Activated B cell treated with CpG ODN at 0.5 μM for 24 hours (primary cell): ENCODE measurements at regions of chr6 and their contacts with region 1.

Region 1: DNA sequence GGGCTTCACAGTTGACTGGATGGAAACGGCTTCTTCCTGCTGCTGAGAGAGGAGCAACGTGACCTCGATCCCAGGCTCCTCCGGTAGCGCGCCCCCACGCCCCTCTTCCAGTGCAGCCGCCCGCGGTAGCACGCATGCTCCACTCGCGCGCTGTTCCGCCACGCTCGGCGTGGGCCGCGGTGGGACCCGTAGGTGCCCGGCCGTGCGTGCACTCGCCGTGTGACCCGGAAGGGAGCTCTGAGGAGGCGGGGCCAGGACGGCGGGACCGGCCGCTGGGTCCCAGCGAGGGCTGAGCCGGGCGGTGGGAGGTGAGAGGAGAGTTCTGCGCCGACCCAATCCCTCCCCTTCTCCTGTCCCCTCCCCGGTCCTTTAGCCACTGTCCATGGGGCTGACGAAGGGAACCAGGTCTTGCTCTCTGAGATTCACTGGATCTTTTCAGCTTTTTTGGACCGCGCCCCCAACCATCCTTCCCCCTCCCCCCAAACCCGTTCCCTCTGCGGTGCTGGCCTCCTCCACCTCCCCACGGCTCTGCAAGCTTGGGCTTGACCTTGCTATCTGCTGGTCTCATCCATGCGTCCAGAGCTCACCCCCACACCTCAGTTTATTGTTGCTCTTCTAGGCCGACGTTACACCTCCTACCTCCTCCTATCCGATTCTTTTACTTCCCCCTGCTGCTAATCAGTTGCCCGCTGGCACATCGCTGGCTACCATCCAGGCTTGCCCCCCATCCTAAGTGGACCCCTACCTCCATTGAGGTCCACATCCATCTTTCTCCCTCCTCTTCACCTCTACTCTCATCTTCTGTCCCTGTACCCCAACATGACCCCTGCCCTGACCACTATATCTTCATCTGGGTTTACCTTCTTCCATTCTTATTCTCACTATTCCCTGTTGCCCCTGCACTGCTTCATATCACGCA is at the start of gene CUL9:
- DNase-seq: peak; percentile 86
- ATAC-seq: peak; percentile 99
- H3K4me3 Mint-ChIP-seq: peak within 1 kb of the TSS; percentile 94
- H3K27ac Mint-ChIP-seq: peak within 1 kb of the TSS; percentile 90
- H3K4me1 Mint-ChIP-seq: peaks cover 35% of the 10 kb centered on the region
- H3K27me3 Mint-ChIP-seq: no peaks in the 10 kb centered on the region
- CTCF ChIP-seq: no peak
- total RNA-seq, gene CUL9: 69.2 and 70.8 TPM in 2 replicates

Region 2: DNA sequence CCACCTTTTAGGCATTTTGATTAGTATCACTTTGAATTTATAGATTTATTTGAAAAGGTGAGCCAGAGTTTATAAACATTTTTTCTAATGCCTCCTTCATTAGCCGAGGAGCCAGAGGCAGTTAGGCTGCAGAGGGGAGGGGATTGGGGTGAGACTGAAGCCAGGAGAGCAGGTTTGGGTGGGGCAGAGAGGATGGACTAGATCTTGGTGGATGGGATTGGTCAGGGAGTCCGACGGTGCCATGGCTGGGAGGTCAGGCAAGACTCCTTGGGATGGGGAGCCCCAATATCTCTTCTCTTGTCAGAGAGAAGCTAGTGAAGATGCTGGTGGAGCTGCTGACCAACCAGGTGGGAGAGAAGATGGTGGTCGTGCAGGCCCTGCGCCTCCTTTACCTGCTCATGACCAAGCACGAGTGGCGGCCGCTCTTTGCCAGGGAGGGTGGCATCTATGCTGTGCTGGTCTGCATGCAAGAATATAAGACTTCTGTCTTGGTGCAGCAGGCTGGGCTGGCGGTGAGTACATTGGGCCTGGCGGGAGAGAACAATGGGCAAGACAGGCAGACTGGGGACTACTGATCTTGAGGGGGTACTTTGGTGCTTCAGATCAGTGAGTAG is 10.6 kb after region 1 on chr6:
- CTCF ChIA-PET with region 1: no interaction called
- POLR2A ChIA-PET with region 1: interaction called, 5 read pairs
- intact Hi-C with region 1: loop called (anchors 1 kb)
- DNase-seq: no peak
- ATAC-seq: no peak
- H3K4me3 Mint-ChIP-seq: no peak overlapping the region
- H3K27ac Mint-ChIP-seq: no peak overlapping the region
- H3K4me1 Mint-ChIP-seq: peaks cover 3% of the 10 kb centered on the region
- H3K27me3 Mint-ChIP-seq: no peaks in the 10 kb centered on the region
- CTCF ChIP-seq: no peak

Region 3: GRCh38 chr6:43222418-43223059 is 40.3 kb after region 1 on chr6:
- CTCF ChIA-PET with region 1: no interaction called
- POLR2A ChIA-PET with region 1: interaction called, 29 read pairs
- intact Hi-C with region 1: loop called (anchors 1 kb)
- DNase-seq: no peak
- ATAC-seq: no peak
- H3K4me3 Mint-ChIP-seq: no peak overlapping the region
- H3K27ac Mint-ChIP-seq: peak overlapping the region; percentile 99
- H3K4me1 Mint-ChIP-seq: peaks cover 49% of the 10 kb centered on the region
- H3K27me3 Mint-ChIP-seq: no peaks in the 10 kb centered on the region
- CTCF ChIP-seq: no peak

Region 4: DNA sequence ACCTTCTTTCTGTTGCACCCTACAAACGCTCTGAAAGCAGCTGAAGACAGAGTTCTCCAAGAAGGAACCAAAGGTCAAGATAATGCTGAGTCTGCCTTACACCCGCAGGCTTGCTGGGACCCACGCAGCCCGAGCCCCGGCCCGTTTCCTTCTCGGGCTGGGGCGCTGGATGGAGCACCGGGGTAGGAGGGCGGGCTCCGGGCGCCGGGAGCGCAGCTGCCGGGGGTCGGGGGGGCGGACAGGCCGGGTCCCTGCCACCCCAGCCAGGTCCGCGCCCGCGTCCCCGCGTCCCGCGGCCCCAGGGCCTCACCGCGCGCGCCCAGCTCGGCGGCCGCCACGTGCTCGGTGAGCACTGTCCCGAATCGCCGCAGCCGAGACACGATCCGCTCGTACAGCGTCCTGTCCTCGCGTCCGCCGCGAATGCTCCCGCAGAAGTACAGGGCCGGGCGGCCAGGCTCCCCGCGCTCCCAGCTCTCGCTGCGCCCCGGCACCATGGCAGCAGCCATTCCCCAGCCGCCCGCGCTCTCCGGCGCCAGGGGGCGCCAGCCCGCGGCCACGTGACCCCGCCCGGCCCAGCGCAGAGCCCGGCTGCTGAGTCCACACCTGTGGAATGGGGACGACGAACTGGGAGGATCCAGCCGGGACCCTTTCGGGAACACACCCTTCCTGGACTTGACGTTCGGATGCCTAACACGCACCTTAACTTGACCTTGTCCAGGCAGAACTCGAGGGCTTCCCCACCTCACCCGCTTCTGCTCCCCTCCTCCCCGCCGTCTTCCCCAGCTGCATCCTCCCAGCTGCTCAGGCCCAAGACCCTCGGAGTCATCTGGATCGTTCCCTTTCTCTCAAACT is 47.0 kb after region 1 on chr6 and contains the start of gene DNPH1:
- CTCF ChIA-PET with region 1: interaction called, 4 read pairs
- POLR2A ChIA-PET with region 1: interaction called, 29 read pairs
- intact Hi-C with region 1: loop called (anchors 1 kb)
- DNase-seq: peak; percentile 87
- ATAC-seq: peak; percentile 69
- H3K4me3 Mint-ChIP-seq: peak within 1 kb of the TSS; percentile 87
- H3K27ac Mint-ChIP-seq: peak within 1 kb of the TSS; percentile 75
- H3K4me1 Mint-ChIP-seq: peaks cover 39% of the 10 kb centered on the region
- H3K27me3 Mint-ChIP-seq: no peaks in the 10 kb centered on the region
- CTCF ChIP-seq: peak; percentile 57
- total RNA-seq, gene DNPH1: 56.7 and 57.5 TPM in 2 replicates

Region 5: DNA sequence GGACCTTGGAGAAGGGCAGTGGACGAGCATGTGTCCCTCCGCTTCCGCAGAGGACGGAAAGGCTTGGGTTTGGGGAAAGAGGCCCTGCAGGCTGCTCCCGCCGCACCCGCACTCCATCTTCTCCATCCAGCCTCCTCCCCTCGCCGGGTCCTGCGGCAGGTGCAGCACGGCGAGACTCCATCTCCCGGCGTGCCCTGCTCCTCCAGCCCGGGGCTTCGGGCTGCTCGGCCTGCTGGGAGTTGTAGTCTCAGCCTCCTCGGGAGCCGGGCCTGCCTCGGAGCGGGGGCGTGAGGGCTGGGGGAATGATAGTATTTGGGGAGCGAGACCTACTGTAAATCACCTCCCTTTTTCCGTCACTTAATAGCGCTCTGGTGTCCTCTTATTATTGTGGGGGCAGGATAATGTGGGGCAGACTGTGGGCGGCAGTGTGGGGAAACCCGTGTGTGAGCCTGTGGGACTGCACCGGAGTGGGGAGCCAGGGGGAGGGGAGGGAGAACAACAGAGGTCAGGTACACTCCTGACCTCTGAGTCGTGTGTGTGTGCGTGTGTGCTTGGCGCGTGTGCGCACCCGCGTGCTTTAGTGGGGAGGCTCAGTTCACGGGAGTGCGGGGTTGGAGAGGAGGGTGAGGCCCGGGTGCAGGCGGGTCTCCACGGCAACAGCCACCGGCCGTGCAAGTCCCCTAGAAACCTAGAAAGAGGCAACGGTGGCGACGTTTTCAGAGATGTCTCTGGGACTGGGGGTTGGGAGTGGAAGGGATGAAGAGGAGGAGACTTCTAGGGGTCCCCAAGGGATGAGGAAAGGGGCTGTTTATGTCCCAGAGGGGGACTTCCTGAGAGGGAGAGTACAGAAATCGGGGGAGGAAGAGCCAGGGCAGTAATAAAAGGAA is 65.2 kb after region 1 on chr6:
- CTCF ChIA-PET with region 1: no interaction called
- POLR2A ChIA-PET with region 1: no interaction called
- intact Hi-C with region 1: loop called (anchors 1 kb)
- DNase-seq: peak; percentile 73
- ATAC-seq: peak; percentile 96
- H3K4me3 Mint-ChIP-seq: no peak overlapping the region
- H3K27ac Mint-ChIP-seq: peak overlapping the region; percentile 76
- H3K4me1 Mint-ChIP-seq: peaks cover 29% of the 10 kb centered on the region
- H3K27me3 Mint-ChIP-seq: peaks cover 17% of the 10 kb centered on the region
- CTCF ChIP-seq: no peak